Heart right ventricle (tissue), 16 donors: ENCODE measurements at regions of chr16 and their contacts with region 1.

Region 1: GRCh38 chr16:24737391-24737871 is 8.0 kb downstream of the TNRC6A start:
- DNase-seq: no peak
- ATAC-seq: peak in 2 of 8 donors; percentile 38 to 42
- H3K4me3 ChIP-seq: no peak overlapping the region
- H3K27ac ChIP-seq: peak overlapping the region in 8 of 10 donors; percentile 19 to 68 (median 41)
- H3K4me1 ChIP-seq: peaks cover 13 to 100% (median 98%) of the 10 kb centered on the region in 9 donors
- H3K27me3 ChIP-seq: no peaks in the 10 kb centered on the region
- CTCF ChIP-seq: no peak

Region 2: DNA sequence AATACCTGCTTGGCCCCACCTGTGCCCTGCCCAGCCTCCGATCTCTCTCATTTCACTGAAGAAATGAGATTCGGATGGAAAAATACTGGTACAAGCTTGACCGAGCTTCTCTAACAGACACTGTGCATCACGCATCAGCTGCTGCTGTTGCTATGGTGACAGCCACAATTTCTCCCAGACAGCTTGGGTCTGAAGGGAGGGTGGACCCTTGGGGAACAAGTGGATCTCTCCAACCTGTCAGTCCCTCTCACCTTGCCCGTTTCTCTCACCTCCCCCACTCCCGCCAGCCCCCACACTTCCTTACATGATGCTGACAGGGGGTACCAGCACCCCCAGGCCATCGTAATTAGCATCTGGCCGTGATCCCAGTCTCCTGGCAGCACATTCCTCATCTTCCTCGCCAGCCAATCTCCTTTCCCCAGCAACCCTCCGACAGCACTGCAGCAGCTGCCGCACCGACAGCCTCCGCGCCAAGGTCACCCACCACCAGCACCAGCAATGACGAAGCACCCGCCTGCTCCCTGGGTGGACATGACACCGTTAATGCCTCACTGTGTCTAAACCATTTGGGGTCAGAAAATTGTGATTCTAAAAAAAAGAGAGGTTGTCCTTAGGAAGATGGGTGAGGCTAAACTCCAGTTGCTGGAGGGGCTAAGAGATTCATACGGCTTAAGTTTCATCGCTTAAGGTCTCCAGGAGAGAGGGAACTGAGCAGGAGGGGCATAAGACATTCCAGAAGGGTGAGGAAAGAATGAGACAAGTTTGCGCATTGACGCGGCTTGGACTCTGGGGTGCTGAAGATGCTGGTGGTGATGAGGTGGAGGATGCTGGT is 66.6 kb before region 1 on chr16:
- intact Hi-C with region 1: no loop called
- DNase-seq: peak; percentile 55 to 64
- ATAC-seq: peak; percentile 50 to 91 (median 80)
- H3K4me3 ChIP-seq: peak overlapping the region in 1 of 10 donors; percentile 2
- H3K27ac ChIP-seq: peak overlapping the region in 7 of 10 donors; percentile 2 to 68 (median 50)
- H3K4me1 ChIP-seq: peaks cover 0 to 27% (median 14%) of the 10 kb centered on the region in 9 donors
- H3K27me3 ChIP-seq: no peaks in the 10 kb centered on the region
- CTCF ChIP-seq: no peak

Region 3: GRCh38 chr16:24776501-24777220 is 39.2 kb after region 1 on chr16:
- intact Hi-C with region 1: loop called in 4 of 10 experiments (anchors 5 to 10 kb)
- DNase-seq: peak; percentile 27 to 41
- ATAC-seq: peak; percentile 70 to 89 (median 87)
- H3K4me3 ChIP-seq: no peak overlapping the region
- H3K27ac ChIP-seq: peak overlapping the region in 9 of 10 donors; percentile 16 to 68 (median 53)
- H3K4me1 ChIP-seq: peaks cover 7 to 62% (median 45%) of the 10 kb centered on the region in 9 donors
- H3K27me3 ChIP-seq: no peaks in the 10 kb centered on the region
- CTCF ChIP-seq: no peak

Region 4: GRCh38 chr16:26133416-26134093 is 1396.1 kb after region 1 on chr16:
- intact Hi-C with region 1: no loop called
- DNase-seq: no peak
- ATAC-seq: no peak
- H3K4me3 ChIP-seq: no peak overlapping the region
- H3K27ac ChIP-seq: no peak overlapping the region
- H3K4me1 ChIP-seq: no peaks in the 10 kb centered on the region
- H3K27me3 ChIP-seq: peaks cover 0 to 2% (median 0%) of the 10 kb centered on the region in 7 donors
- CTCF ChIP-seq: no peak